B cell (primary cell): ENCODE measurements at regions of chr6 and their contacts with region 1.

Region 1: GRCh38 chr6:3251462-3252314 is 7.1 kb upstream of the PSMG4 start:
- DNase-seq: peak; percentile 82
- ATAC-seq: peak; percentile 100
- H3K4me3 ChIP-seq: peak overlapping the region in 2 of 5 experiments; percentile 5 to 25
- H3K4me3 Mint-ChIP-seq: peak overlapping the region; percentile 7
- H3K27ac ChIP-seq: no peak overlapping the region
- H3K27ac Mint-ChIP-seq: no peak overlapping the region
- H3K4me1 ChIP-seq: peaks cover 7 to 8% of the 10 kb centered on the region in 2 donors
- H3K4me1 Mint-ChIP-seq: peaks cover 4% of the 10 kb centered on the region
- H3K27me3 ChIP-seq: peaks cover 0 to 32% (median 14%) of the 10 kb centered on the region in 4 experiments
- H3K27me3 Mint-ChIP-seq: peaks cover 32% of the 10 kb centered on the region
- CTCF ChIP-seq: peak; percentile 99

Region 2: DNA sequence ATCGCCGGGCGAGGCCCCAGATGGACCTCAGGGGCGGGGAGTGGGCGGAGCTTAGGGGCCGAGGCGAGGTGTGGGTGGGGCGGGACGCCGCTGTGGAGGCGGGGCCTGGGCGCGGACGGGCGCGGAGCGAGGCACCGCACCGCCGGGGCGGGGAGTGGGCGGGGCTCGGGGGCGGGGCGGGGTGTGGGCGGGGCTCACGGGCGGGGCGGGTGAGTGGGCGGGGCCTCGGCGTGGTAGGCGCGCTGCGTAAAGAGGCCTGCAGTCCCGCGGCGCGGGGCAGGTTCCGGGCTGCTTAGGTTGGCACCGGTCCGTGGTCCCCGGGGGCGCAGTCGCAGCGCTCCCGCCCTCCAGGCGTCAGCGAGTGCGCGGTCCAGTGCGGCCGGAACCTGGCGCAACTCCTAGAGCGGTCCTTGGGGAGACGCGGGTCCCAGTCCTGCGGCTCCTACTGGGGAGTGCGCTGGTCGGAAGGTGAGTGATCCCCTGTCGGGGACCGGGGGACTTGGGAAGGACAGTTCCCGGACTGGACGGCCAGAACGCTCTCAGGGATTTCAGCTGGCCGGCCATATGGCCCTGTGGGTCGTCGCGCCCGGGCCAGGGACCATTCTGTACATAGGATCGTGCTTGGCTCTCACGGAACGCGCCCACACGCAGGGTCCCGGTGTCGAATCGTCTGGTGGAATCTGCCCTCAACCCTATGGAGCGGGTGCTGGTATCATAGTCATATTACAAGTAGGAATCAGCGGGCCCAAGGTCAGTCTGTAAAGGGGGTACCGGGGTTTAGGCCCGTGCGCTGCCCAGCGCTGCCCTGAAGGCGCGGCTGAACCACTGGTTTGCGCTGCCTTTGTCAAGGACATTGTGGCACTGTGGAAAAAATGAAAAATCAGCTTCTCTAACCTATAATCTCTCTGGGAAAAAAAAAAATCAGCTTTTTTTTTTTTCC is 251.8 kb before region 1 on chr6 and contains the start of gene NQO2:
- CTCF ChIA-PET with region 1: interaction called, 7 read pairs
- POLR2A ChIA-PET with region 1: no interaction called
- intact Hi-C with region 1: loop called (anchors 2 kb)
- DNase-seq: peak; percentile 92
- ATAC-seq: peak; percentile 88
- H3K4me3 ChIP-seq: peak within 1 kb of the TSS; percentile 65 to 91 (median 85)
- H3K4me3 Mint-ChIP-seq: peak within 1 kb of the TSS; percentile 96
- H3K27ac ChIP-seq: peak within 1 kb of the TSS; percentile 65 to 71
- H3K27ac Mint-ChIP-seq: peak within 1 kb of the TSS; percentile 89
- H3K4me1 ChIP-seq: peaks cover 11 to 21% of the 10 kb centered on the region in 2 donors
- H3K4me1 Mint-ChIP-seq: peaks cover 20% of the 10 kb centered on the region
- H3K27me3 ChIP-seq: no peaks in the 10 kb centered on the region
- H3K27me3 Mint-ChIP-seq: no peaks in the 10 kb centered on the region
- CTCF ChIP-seq: no peak
- total RNA-seq, gene NQO2: 17.9 and 21.5 TPM in 2 replicates

Region 3: DNA sequence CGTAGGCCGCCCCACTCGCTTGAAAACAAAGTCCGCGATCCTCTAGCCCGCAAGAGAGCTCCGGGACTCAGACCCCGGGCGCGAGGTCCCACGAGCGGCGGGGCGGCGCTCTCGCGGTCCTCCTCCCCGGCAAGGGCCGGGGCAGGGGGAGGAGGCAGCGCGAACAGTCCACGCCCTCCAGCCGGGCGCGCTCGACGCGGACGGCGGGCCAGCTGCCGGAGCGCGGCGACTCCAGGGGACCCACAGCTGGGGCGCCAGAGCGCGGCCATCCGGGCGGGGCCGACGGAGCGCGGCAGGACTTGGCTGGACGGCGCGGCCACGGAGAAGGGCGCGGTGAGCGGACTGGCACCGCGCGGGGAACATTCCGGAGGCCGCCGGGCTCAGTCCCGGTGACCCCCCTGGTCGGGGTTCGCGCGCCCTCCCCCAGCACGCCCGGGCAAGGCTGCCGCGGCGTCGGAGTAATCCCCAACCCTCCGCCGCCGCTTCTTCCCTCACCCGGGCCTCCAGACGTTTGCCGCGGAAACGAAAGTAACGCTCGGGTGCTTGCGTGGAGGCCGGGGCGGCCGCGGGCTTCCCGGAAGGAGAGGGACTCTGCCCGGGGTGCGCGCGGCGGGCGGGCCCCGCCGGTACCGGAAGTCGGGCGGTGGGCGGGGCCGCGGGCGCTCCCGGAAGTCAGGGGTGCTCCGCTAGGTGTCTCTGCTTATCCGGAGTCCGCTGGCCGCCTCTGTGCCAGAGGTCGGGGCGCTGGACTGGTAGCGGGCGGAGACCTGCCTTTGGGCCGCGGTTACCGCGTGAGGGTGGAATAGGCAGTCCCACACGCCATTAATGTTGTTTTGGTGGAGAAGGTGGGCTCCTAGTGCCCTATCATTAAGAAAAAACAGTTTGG is 183.1 kb before region 1 on chr6 and contains the start of gene RIPK1:
- CTCF ChIA-PET with region 1: interaction called, 3 read pairs
- POLR2A ChIA-PET with region 1: no interaction called
- intact Hi-C with region 1: loop called (anchors 2 kb)
- DNase-seq: peak; percentile 95
- ATAC-seq: peak; percentile 73
- H3K4me3 ChIP-seq: peak within 1 kb of the TSS; percentile 55 to 87 (median 85)
- H3K4me3 Mint-ChIP-seq: peak within 1 kb of the TSS; percentile 98
- H3K27ac ChIP-seq: peak within 1 kb of the TSS; percentile 92 to 99
- H3K27ac Mint-ChIP-seq: peak within 1 kb of the TSS; percentile 99
- H3K4me1 ChIP-seq: peaks cover 17 to 23% of the 10 kb centered on the region in 2 donors
- H3K4me1 Mint-ChIP-seq: peaks cover 43% of the 10 kb centered on the region
- H3K27me3 ChIP-seq: no peaks in the 10 kb centered on the region
- H3K27me3 Mint-ChIP-seq: no peaks in the 10 kb centered on the region
- CTCF ChIP-seq: no peak
- total RNA-seq, gene RIPK1: 26.2 and 28.1 TPM in 2 replicates

Region 4: GRCh38 chr6:3125815-3126214 is 125.9 kb before region 1 on chr6:
- CTCF ChIA-PET with region 1: interaction called, 82 read pairs
- POLR2A ChIA-PET with region 1: no interaction called
- intact Hi-C with region 1: loop called (anchors 1 kb)
- DNase-seq: no peak
- ATAC-seq: no peak
- H3K4me3 ChIP-seq: no peak overlapping the region
- H3K4me3 Mint-ChIP-seq: no peak overlapping the region
- H3K27ac ChIP-seq: no peak overlapping the region
- H3K27ac Mint-ChIP-seq: no peak overlapping the region
- H3K4me1 ChIP-seq: peaks cover 0 to 12% of the 10 kb centered on the region in 2 donors
- H3K4me1 Mint-ChIP-seq: peaks cover 10% of the 10 kb centered on the region
- H3K27me3 ChIP-seq: no peaks in the 10 kb centered on the region
- H3K27me3 Mint-ChIP-seq: no peaks in the 10 kb centered on the region
- CTCF ChIP-seq: no peak

Region 5: GRCh38 chr6:3157131-3157927 is 94.4 kb before region 1 on chr6 and contains the start of gene TUBB2A:
- CTCF ChIA-PET with region 1: interaction called, 19 read pairs
- POLR2A ChIA-PET with region 1: no interaction called
- intact Hi-C with region 1: loop called (anchors 1 kb)
- DNase-seq: peak; percentile 91
- ATAC-seq: peak; percentile 90
- H3K4me3 ChIP-seq: peak within 1 kb of the TSS; percentile 47 to 93 (median 65)
- H3K4me3 Mint-ChIP-seq: peak within 1 kb of the TSS; percentile 89
- H3K27ac ChIP-seq: peak within 1 kb of the TSS in 1 of 2 donors; percentile 67
- H3K27ac Mint-ChIP-seq: peak within 1 kb of the TSS; percentile 88
- H3K4me1 ChIP-seq: peaks cover 8 to 18% of the 10 kb centered on the region in 2 donors
- H3K4me1 Mint-ChIP-seq: peaks cover 24% of the 10 kb centered on the region
- H3K27me3 ChIP-seq: peaks cover 0 to 5% (median 0%) of the 10 kb centered on the region in 4 experiments
- H3K27me3 Mint-ChIP-seq: peaks cover 7% of the 10 kb centered on the region
- CTCF ChIP-seq: peak; percentile 70
- total RNA-seq, gene TUBB2A: 4.0 and 4.2 TPM in 2 replicates

Region 6: GRCh38 chr6:3162565-3163247 is 89.0 kb before region 1 on chr6:
- CTCF ChIA-PET with region 1: interaction called, 19 read pairs
- POLR2A ChIA-PET with region 1: no interaction called
- intact Hi-C with region 1: loop called (anchors 1 kb)
- DNase-seq: peak; percentile 81
- ATAC-seq: peak; percentile 79
- H3K4me3 ChIP-seq: peak overlapping the region in 4 of 5 experiments; percentile 71 to 81 (median 78)
- H3K4me3 Mint-ChIP-seq: peak overlapping the region; percentile 83
- H3K27ac ChIP-seq: peak overlapping the region in 1 of 2 donors; percentile 51
- H3K27ac Mint-ChIP-seq: peak overlapping the region; percentile 71
- H3K4me1 ChIP-seq: peaks cover 10 to 18% of the 10 kb centered on the region in 2 donors
- H3K4me1 Mint-ChIP-seq: peaks cover 23% of the 10 kb centered on the region
- H3K27me3 ChIP-seq: peaks cover 0 to 10% (median 0%) of the 10 kb centered on the region in 4 experiments
- H3K27me3 Mint-ChIP-seq: peaks cover 4% of the 10 kb centered on the region
- CTCF ChIP-seq: no peak

Region 7: DNA sequence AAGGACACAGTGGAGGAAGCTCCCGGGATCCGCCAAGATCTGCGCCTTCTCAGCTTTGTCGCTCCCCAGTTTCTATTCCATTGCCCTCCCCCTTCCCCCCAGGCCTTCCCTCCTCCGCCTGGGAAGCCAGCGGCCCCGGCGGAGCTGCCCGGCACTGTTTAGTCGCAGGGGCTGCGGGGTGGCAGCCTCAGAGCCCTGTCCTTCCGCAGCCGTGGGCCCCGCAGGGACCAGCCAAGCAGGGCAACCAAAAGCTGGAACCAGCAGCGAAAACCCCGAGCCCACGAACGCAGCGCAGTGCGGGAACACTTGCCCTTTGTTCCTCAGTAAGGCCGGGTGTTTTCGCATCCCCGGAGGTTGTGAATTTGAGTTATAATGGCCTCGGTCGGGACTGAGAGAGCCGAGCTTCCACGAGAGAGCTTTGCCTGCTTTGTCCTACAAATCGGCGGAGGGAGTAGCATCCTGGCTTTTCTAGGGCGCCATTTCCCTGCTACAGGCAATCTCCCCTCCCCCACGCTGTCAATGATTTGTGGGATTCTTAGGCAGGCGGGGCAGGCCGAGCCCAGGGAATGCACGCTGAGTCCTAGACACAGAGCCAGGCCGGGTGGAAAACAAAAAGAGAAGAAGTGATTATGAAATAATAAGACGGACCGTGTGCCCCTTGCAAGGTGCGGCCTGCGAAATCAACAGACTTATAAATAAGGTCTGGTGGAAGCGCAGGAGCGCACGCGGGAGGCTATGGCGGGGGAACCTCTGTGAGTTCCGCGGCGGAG is 20.3 kb before region 1 on chr6:
- CTCF ChIA-PET with region 1: interaction called, 18 read pairs
- POLR2A ChIA-PET with region 1: no interaction called
- intact Hi-C with region 1: no loop called
- DNase-seq: no peak
- ATAC-seq: no peak
- H3K4me3 ChIP-seq: peak overlapping the region in 3 of 5 experiments; percentile 13 to 46 (median 33)
- H3K4me3 Mint-ChIP-seq: peak overlapping the region; percentile 49
- H3K27ac ChIP-seq: no peak overlapping the region
- H3K27ac Mint-ChIP-seq: no peak overlapping the region
- H3K4me1 ChIP-seq: peaks cover 55 to 57% of the 10 kb centered on the region in 2 donors
- H3K4me1 Mint-ChIP-seq: peaks cover 49% of the 10 kb centered on the region
- H3K27me3 ChIP-seq: peaks cover 0 to 79% (median 61%) of the 10 kb centered on the region in 4 experiments
- H3K27me3 Mint-ChIP-seq: peaks cover 78% of the 10 kb centered on the region
- CTCF ChIP-seq: no peak